Activated CD4-positive, alpha-beta memory T cell treated with anti-CD3 and anti-CD28 coated beads for 36 hours (primary cell): ENCODE measurements at regions of chr6 and their contacts with region 1.

Region 1: GRCh38 chr6:116371120-116371917 is 572 bp downstream of the DSE start:
- DNase-seq: peak; percentile 49
- H3K4me3 Mint-ChIP-seq: peak overlapping the region; percentile 75
- H3K27ac Mint-ChIP-seq: no peak overlapping the region
- H3K4me1 Mint-ChIP-seq: peaks cover 15% of the 10 kb centered on the region
- H3K27me3 Mint-ChIP-seq: no peaks in the 10 kb centered on the region

Region 2: GRCh38 chr6:116387374-116387773 is 16.1 kb after region 1 on chr6:
- CTCF ChIA-PET with region 1: interaction called, 4 read pairs
- POLR2A ChIA-PET with region 1: no interaction called
- intact Hi-C with region 1: loop called (anchors 2 kb)
- DNase-seq: peak; percentile 38
- H3K4me3 Mint-ChIP-seq: no peak overlapping the region
- H3K27ac Mint-ChIP-seq: no peak overlapping the region
- H3K4me1 Mint-ChIP-seq: peaks cover 38% of the 10 kb centered on the region
- H3K27me3 Mint-ChIP-seq: no peaks in the 10 kb centered on the region

Region 3: GRCh38 chr6:116430860-116431259 is 59.5 kb after region 1 on chr6:
- CTCF ChIA-PET with region 1: no interaction called
- POLR2A ChIA-PET with region 1: no interaction called
- intact Hi-C with region 1: no loop called
- DNase-seq: no peak
- H3K4me3 Mint-ChIP-seq: no peak overlapping the region
- H3K27ac Mint-ChIP-seq: no peak overlapping the region
- H3K4me1 Mint-ChIP-seq: no peaks in the 10 kb centered on the region
- H3K27me3 Mint-ChIP-seq: no peaks in the 10 kb centered on the region

Region 4: DNA sequence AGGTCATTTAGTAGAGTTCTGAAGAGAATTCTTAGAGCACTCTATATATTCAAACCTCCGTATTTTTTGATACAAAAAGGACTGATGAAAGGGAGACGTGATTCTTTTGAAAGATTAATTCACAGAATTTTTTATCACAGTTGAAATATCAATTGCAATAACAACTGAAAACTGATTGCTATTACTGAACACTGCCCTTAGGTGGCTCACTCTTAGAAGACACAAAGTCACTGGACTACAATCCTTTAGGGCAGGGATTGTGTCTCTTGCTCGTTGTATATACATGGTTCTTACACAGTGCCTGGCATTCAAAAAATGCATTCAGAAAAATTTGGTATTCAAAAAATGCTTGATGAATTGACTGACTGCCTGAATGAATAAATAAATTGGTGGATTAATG is 72.8 kb after region 1 on chr6:
- CTCF ChIA-PET with region 1: interaction called, 4 read pairs
- POLR2A ChIA-PET with region 1: no interaction called
- intact Hi-C with region 1: loop called (anchors 5 kb)
- DNase-seq: no peak
- H3K4me3 Mint-ChIP-seq: no peak overlapping the region
- H3K27ac Mint-ChIP-seq: no peak overlapping the region
- H3K4me1 Mint-ChIP-seq: peaks cover 7% of the 10 kb centered on the region
- H3K27me3 Mint-ChIP-seq: peaks cover 9% of the 10 kb centered on the region

Region 5: GRCh38 chr6:116461932-116462885 is 90.9 kb after region 1 on chr6:
- CTCF ChIA-PET with region 1: no interaction called
- POLR2A ChIA-PET with region 1: no interaction called
- intact Hi-C with region 1: loop called (anchors 5 kb)
- DNase-seq: peak; percentile 62
- H3K4me3 Mint-ChIP-seq: peak overlapping the region; percentile 60
- H3K27ac Mint-ChIP-seq: no peak overlapping the region
- H3K4me1 Mint-ChIP-seq: peaks cover 22% of the 10 kb centered on the region
- H3K27me3 Mint-ChIP-seq: peaks cover 32% of the 10 kb centered on the region

Region 6: DNA sequence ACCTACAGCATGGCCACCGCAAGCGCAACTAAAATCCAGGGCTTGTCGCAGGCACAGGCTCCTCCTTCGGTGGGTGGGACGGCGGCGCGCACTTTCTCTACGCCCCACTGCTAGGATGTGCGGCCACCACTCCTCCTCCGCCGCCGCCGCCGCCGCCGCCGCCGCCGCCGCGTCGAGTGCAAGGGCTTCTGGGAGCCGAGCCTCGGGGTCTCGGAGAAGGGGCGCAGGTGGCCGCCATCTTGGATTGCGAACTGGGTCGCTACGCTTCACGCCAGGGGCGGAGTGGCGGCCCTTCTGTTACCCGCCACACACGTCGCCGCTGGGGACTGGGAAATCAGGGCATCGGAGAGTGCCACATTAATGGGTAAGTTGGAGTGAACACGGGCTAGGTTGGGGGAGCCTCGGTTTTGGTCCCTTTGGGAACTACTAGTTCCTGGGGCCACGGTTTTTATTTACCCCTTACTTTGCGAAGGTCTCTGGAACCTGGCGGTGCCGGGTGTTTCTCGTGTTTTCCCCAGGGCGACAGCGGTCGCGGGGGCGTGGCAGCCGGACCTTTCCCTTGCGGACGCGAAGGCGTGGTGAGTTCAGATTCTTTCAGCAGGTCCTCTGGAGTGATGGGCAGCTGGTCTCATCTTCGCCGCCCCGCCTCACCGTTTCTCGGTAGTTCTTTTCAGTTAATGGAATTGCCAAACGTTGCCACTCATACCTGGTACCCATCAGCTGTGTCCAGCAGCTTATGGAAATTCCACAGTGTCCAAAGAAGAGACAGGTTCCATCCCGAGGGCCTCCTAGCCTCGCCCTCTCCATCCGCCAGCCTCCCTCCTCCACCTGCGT is 309.9 kb after region 1 on chr6 and contains the start of gene KPNA5:
- CTCF ChIA-PET with region 1: no interaction called
- POLR2A ChIA-PET with region 1: no interaction called
- intact Hi-C with region 1: loop called (anchors 10 kb)
- DNase-seq: peak; percentile 95
- H3K4me3 Mint-ChIP-seq: peak within 1 kb of the TSS; percentile 99
- H3K27ac Mint-ChIP-seq: peak within 1 kb of the TSS; percentile 96
- H3K4me1 Mint-ChIP-seq: peaks cover 41% of the 10 kb centered on the region
- H3K27me3 Mint-ChIP-seq: no peaks in the 10 kb centered on the region
- total RNA-seq, gene KPNA5: 10.0 to 10.2 TPM